H1 (cell line): ENCODE measurements at regions of chr12 and their contacts with region 1.

Region 1: GRCh38 chr12:53098982-53099651 is 1.6 kb downstream of the IGFBP6 start:
- DNase-seq: peak; percentile 65 to 97
- H3K4me3 ChIP-seq: peak overlapping the region in 2 of 4 experiments; percentile 5 to 85; a peak in 3 of 8 replicates
- H3K27ac ChIP-seq: no peak overlapping the region
- H3K4me1 ChIP-seq: peaks cover 4 to 21% (median 7%) of the 10 kb centered on the region in 4 experiments
- H3K27me3 ChIP-seq: peaks cover 0 to 25% (median 15%) of the 10 kb centered on the region in 4 experiments; a peak in 5 of 7 replicates
- CTCF ChIP-seq: peak; percentile 82 to 87 (median 86)
- EP300 ChIP-seq: no peak
- POLR2A ChIP-seq: no peak
- RAD21 ChIP-seq: peak; percentile 79 to 81

Region 2: GRCh38 chr12:53054112-53054833 is 44.8 kb before region 1 on chr12:
- CTCF ChIA-PET with region 1: interaction called, 531 read pairs
- POLR2A ChIA-PET with region 1: interaction called, 7 read pairs
- DNase-seq: peak; percentile 87 to 97
- H3K4me3 ChIP-seq: peak overlapping the region; percentile 82 to 86 (median 84)
- H3K27ac ChIP-seq: peak overlapping the region; percentile 75; the same call in 1 of the 2 replicates
- H3K4me1 ChIP-seq: peaks cover 4 to 30% (median 23%) of the 10 kb centered on the region in 4 experiments
- H3K27me3 ChIP-seq: peaks cover 0 to 12% (median 3%) of the 10 kb centered on the region in 4 experiments; a peak in 4 of 7 replicates
- CTCF ChIP-seq: no peak
- EP300 ChIP-seq: no peak
- POLR2A ChIP-seq: peak in 1 of 2 experiments; percentile 86; a peak in 2 of 3 replicates
- RAD21 ChIP-seq: no peak

Region 3: DNA sequence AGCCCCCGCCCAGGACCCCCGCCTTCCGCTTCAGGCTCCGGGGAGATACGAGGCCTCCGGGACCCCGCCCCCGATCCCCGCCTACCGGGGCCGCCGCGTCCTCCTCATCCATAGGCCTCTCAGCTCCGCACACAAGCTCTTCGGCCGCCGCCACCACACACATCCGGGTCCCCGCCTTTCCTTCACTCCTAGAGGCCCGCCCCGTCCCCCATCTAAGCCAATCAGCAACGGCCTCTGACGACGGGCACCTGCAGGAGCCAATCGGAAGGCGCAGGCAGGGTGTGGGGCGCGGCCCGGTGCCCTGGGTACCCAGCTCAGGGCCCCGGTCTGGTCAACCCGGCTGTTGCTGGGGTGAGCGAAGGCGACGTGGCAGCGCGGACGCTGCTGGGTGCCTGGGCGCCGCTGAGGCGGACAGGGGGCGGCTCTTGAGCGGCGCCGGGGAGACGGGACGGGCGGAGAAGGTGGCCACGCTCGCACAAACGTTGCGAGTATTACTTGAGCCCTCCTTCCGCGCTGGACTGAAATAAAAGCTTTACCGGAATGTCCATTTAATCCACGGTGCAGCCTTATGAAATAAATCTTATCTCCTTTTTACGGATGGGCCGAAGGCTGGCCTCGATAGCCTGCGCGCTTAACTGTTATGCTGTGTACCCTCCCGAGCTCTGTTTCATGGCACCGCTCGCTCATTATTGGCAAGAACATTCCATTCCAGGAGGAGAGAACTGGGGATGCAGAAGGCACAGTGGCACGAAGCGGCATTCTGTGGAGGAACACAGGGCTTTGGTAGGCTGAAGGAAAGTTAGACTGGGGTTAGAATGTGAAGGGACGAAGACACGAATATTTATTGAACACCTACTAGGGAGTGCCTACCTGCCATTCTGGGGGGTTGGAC is 19.6 kb before region 1 on chr12 and contains the start of gene SPRYD3:
- CTCF ChIA-PET with region 1: interaction called, 531 read pairs
- POLR2A ChIA-PET with region 1: interaction called, 21 read pairs
- DNase-seq: peak; percentile 94 to 100
- H3K4me3 ChIP-seq: peak within 1 kb of the TSS; percentile 49 to 77 (median 68)
- H3K27ac ChIP-seq: peak within 1 kb of the TSS; percentile 62; the same call in 1 of the 2 replicates
- H3K4me1 ChIP-seq: peaks cover 0 to 3% (median 2%) of the 10 kb centered on the region in 4 experiments; a peak in 3 of 7 replicates
- H3K27me3 ChIP-seq: peaks cover 0 to 6% (median 4%) of the 10 kb centered on the region in 4 experiments; a peak in 4 of 7 replicates
- CTCF ChIP-seq: no peak
- EP300 ChIP-seq: no peak
- POLR2A ChIP-seq: no peak; a peak in 2 of 3 replicates
- RAD21 ChIP-seq: no peak
- total RNA-seq, gene SPRYD3: 6.6 and 6.8 TPM in 2 replicates

Region 4: GRCh38 chr12:53115112-53115890 is 16.2 kb after region 1 on chr12:
- CTCF ChIA-PET with region 1: interaction called, 20 read pairs
- POLR2A ChIA-PET with region 1: interaction called, 3 read pairs
- DNase-seq: peak; percentile 38 to 90
- H3K4me3 ChIP-seq: no peak overlapping the region
- H3K27ac ChIP-seq: no peak overlapping the region
- H3K4me1 ChIP-seq: peaks cover 0 to 3% (median 2%) of the 10 kb centered on the region in 4 experiments; a peak in 3 of 7 replicates
- H3K27me3 ChIP-seq: no peaks in the 10 kb centered on the region
- CTCF ChIP-seq: no peak
- EP300 ChIP-seq: no peak
- POLR2A ChIP-seq: no peak
- RAD21 ChIP-seq: no peak